ENCODE measurements at regions of chr17 and their contacts with region 1.

Region 1: GRCh38 chr17:5769593-5770354 is 185.5 kb upstream of the NLRP1 start:
- DNase-seq: no peak
- ATAC-seq: no peak
- H3K4me3 ChIP-seq: no peak overlapping the region
- H3K27ac ChIP-seq: no peak overlapping the region
- H3K4me1 ChIP-seq: peaks cover 0 to 1% of the 10 kb centered on the region in 2 donors
- H3K27me3 ChIP-seq: peaks cover 4 to 35% (median 20%) of the 10 kb centered on the region in 3 donors
- CTCF ChIP-seq: no peak
- POLR2A ChIP-seq: no peak

Region 2: GRCh38 chr17:5715478-5715877 is 54.3 kb before region 1 on chr17:
- in situ Hi-C with region 1: no loop called
- intact Hi-C with region 1: loop called (anchors 5 kb)
- DNase-seq: no peak
- ATAC-seq: no peak
- H3K4me3 ChIP-seq: no peak overlapping the region
- H3K27ac ChIP-seq: no peak overlapping the region
- H3K4me1 ChIP-seq: peaks cover 5 to 16% of the 10 kb centered on the region in 2 donors
- H3K27me3 ChIP-seq: peaks cover 4 to 54% (median 8%) of the 10 kb centered on the region in 3 donors
- CTCF ChIP-seq: no peak
- POLR2A ChIP-seq: no peak

Region 3: GRCh38 chr17:5809580-5810188 is 39.9 kb after region 1 on chr17:
- in situ Hi-C with region 1: no loop called
- intact Hi-C with region 1: no loop called
- DNase-seq: no peak
- ATAC-seq: no peak
- H3K4me3 ChIP-seq: no peak overlapping the region
- H3K27ac ChIP-seq: no peak overlapping the region
- H3K4me1 ChIP-seq: no peaks in the 10 kb centered on the region
- H3K27me3 ChIP-seq: no peaks in the 10 kb centered on the region
- CTCF ChIP-seq: no peak
- POLR2A ChIP-seq: no peak

Region 4: GRCh38 chr17:5820721-5821456 is 51.1 kb after region 1 on chr17:
- in situ Hi-C with region 1: loop called in 1 of 4 experiments (anchors 10 kb)
- intact Hi-C with region 1: no loop called
- DNase-seq: no peak
- ATAC-seq: no peak
- H3K4me3 ChIP-seq: no peak overlapping the region
- H3K27ac ChIP-seq: no peak overlapping the region
- H3K4me1 ChIP-seq: no peaks in the 10 kb centered on the region
- H3K27me3 ChIP-seq: no peaks in the 10 kb centered on the region
- CTCF ChIP-seq: no peak
- POLR2A ChIP-seq: no peak

Region 5: DNA sequence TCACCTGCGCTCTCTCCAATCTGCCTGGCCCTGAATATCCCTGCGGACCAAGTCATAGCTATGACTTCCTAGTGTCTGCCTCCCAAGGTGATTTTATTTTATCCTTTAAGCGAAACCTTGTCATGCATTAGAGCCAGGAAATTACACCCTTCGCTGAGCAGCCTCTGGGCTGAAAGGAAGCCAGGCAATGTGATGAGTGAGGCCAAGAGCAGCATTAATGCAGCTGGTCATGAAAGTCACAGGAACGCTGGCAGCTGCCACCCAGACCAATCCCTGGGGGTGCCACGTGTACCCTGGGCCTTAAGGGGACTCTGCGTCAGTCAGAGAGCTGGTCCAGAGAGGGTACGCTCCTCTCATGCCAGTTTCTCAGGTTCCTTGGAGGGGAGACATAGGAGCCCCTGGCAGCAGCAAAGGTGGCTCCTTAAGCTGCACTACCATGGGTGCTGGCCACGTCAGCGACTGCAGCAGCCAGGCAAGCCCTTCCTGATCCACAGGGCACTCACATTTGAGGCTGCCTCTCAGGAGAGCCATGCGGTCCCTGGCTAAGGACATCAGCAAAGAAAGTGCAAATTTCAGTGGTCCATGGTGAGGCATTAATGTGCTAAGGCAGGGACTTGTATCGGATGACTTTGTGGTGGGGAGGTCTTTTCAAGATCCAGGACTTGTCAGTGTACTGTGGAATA is 257.7 kb after region 1 on chr17:
- in situ Hi-C with region 1: no loop called
- intact Hi-C with region 1: no loop called
- DNase-seq: no peak
- ATAC-seq: no peak
- H3K4me3 ChIP-seq: no peak overlapping the region
- H3K27ac ChIP-seq: no peak overlapping the region
- H3K4me1 ChIP-seq: peaks cover 0 to 9% of the 10 kb centered on the region in 2 donors
- H3K27me3 ChIP-seq: peaks cover 0 to 8% (median 4%) of the 10 kb centered on the region in 3 donors
- CTCF ChIP-seq: no peak
- POLR2A ChIP-seq: no peak

Measured in gastrocnemius medialis (tissue), 4 donors.